ENCODE measurements at regions of chr15 and their contacts with region 1.

Region 1: DNA sequence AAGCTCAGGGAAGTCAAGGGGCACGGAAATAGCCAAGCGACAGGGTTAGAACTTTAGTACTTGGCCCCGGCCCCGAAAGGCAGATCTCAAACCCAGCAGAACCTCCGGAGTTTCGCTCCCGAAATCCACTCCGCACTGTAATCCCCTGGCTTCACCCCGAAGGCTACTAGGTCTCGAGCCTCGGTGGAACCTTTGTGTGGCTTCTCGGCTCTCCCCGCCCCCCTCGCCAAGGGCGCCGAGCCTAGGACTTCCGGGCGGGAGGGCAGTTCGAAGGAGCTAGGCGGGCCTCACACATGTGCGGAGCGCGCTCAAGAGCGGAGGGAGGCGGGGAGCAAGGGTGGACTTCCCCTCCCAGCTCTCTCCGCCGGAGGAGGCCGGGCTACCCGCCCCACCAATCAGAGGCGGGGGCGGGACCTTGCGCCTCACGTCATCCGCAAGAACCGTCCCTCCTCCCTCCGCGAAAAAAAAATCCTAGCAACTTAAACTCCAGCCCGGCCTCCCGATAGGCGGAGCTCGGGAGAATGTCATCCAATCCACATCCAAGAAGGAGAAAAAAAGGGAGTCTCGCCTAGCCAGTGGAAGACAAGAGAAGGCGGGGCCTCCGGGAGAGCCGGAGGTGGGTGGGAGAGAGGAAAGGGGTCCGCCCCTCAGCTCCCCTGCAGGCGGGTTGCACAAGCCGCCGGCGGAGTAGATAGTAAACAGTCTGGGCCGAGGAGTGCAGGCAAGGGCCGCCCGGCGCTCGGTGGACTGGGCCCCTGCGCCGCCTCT is 2.4 kb upstream of the SIN3A start:
- DNase-seq: peak; percentile 98
- H3K4me3 Mint-ChIP-seq: peak overlapping the region; percentile 98
- H3K27ac Mint-ChIP-seq: peak overlapping the region; percentile 98
- H3K4me1 Mint-ChIP-seq: peaks cover 24% of the 10 kb centered on the region
- H3K27me3 Mint-ChIP-seq: no peaks in the 10 kb centered on the region

Region 2: GRCh38 chr15:74540761-74541493 is 913.0 kb before region 1 on chr15 and contains the start of gene ARID3B:
- CTCF ChIA-PET with region 1: no interaction called
- intact Hi-C with region 1: loop called (anchors 5 kb)
- DNase-seq: peak; percentile 99
- H3K4me3 Mint-ChIP-seq: peak within 1 kb of the TSS; percentile 97
- H3K27ac Mint-ChIP-seq: peak within 1 kb of the TSS; percentile 90
- H3K4me1 Mint-ChIP-seq: peaks cover 46% of the 10 kb centered on the region
- H3K27me3 Mint-ChIP-seq: no peaks in the 10 kb centered on the region
- total RNA-seq, gene ARID3B: 14.2 to 15.9 TPM

Region 3: DNA sequence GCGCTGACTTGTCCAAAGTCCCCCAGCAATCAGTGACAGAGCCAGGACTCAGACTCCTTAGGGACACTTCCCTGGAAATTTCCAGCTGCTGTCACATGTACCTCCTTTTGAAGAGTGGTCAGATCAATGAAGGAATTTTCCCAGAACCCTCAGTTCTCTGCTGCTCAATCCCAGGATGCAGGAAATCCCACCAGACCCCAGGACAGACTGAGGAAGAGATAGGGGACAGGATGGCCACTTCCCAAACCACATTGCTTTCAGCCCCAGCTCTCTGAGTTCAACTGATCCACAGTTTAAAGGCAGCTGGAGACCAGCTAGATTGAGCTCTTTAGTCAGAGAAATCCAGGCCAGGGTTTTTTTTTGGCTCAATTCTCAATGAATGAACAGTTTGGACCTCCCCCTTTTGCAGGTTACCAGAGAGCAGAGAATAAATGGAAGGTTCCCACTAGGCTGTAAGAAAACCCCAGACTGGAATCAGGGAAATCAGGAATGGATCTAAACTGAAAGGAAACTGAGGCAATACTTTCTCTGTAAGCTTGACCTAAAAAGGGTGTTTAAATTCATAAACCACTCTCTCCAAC is 730.0 kb before region 1 on chr15:
- CTCF ChIA-PET with region 1: no interaction called
- intact Hi-C with region 1: no loop called
- DNase-seq: no peak
- H3K4me3 Mint-ChIP-seq: no peak overlapping the region
- H3K27ac Mint-ChIP-seq: no peak overlapping the region
- H3K4me1 Mint-ChIP-seq: peaks cover 11% of the 10 kb centered on the region
- H3K27me3 Mint-ChIP-seq: peaks cover 14% of the 10 kb centered on the region

Region 4: DNA sequence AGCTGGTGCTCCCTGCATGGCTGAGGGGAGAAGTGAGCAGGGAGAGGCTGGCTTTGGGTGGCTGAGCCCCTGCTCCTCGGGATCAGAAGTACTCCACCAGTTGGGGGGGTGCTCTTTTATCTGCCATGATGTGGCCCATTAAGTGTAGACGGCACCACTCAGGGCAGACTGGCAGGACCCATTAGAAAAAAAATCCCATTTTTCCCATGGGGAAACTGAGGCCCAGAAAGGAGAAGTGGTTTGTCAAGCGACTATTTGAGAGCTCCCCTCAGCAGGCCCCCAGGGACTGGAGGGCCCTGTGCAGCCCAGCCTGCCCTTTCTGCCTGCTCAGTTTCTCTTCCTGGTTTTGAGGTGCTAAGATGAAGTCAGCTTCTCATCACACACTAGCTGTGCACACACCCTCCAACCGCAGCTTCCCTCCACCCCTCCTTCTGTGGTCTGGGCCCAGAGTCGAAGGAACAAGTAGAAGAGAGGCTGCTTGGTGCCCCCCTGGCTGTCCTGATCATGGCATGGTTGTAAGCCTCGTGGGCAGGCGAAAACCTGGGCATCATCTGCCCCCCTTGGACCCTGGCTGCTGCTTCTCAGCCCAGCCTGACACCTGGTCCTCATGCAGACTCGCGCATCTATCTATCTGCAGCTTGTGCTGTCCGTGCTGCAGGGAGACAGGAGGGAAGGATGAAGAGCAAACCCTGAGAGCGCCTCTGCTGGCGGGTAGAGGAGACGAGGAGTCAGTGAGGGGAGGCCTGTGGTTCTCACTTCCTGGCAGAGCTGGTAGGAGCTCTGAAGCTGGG is 666.4 kb before region 1 on chr15:
- CTCF ChIA-PET with region 1: no interaction called
- intact Hi-C with region 1: loop called (anchors 2 kb)
- DNase-seq: peak; percentile 98
- H3K4me3 Mint-ChIP-seq: peak overlapping the region; percentile 93
- H3K27ac Mint-ChIP-seq: peak overlapping the region; percentile 99
- H3K4me1 Mint-ChIP-seq: peaks cover 55% of the 10 kb centered on the region
- H3K27me3 Mint-ChIP-seq: no peaks in the 10 kb centered on the region

Region 5: DNA sequence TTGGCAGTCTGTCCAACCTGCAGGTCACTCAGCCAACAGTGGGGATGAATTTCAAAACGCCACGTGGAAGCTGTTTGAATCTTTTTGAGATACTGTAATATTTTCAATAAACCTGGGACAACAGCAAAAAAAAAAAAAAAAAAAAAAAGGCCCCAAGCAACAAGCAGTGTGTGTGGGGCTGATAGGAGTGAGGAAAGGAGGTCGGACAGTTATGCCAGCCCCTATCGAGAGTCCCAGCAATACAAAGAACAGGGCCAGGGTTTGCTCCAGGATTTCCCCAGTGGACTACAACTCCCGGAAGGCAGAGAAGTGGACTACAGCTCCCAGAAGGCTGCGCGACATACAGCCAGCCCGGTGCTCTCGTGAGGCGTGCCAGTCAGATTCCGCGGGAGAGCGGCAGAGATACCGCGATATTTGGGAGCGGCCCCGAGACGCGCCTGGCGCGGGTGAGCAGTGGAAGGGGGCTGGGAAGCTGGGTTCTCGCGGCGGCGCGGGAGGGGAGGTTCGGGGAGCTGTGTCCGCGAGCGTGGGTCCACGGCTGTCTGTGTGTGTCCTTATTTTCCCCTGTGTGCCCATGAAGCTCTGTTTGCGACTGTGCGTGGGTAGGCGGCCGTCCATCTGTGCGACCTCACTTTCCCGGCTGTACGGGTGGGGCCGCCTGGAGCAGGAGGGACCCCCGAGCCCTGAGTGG is 430.6 kb before region 1 on chr15 and contains the start of gene PPCDC:
- CTCF ChIA-PET with region 1: no interaction called
- intact Hi-C with region 1: loop called (anchors 2 kb)
- DNase-seq: peak; percentile 98
- H3K4me3 Mint-ChIP-seq: peak within 1 kb of the TSS; percentile 90
- H3K27ac Mint-ChIP-seq: peak within 1 kb of the TSS; percentile 90
- H3K4me1 Mint-ChIP-seq: peaks cover 16% of the 10 kb centered on the region
- H3K27me3 Mint-ChIP-seq: no peaks in the 10 kb centered on the region
- total RNA-seq, gene PPCDC: 17.5 to 18.0 TPM

Region 6: DNA sequence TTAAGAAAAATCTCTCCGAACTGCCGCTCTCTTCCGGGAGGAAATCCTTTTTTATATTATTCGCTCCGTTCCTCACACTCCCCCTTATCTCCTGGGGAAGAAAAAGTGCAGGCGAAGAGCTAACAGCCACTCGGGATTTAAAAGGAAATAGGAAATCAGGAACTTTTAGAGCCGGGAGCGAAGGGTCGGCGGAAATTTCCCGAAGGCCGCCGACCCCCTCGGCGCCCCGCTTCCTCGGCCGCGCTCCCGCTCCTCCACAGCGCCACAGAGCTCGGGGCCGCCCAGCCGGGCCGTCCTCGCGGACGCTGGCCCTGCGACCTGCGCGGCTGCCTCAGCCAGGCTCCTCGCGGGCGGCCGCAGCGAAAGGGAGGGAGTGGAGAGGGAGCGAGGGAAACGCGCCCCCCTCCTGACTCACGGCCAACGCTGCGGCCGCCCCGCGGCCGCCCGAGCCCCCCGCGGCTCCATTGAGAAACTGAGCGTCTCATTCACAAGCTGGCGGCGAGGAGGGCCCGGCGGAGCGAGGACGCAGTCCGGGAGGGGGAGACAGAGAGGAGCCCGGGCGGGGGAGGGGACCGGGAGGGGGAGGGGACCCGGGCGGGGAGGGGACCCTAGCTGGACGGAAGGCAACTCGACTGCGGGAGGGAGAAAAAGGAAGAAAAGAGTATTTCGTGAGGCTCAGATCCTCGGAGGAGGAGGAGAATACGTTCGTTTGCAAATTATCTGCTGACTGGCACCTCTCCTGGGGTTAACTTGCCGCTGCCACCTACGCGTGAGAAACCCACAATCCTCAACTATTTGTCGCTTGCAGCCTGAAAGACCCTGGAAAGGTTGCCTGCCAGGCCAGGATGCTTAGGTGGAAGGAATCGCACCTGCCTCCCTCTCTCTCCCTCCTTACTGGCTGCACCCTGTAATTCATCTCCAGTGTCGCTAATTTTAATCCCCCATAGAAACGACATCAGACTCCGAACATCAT is 125.3 kb after region 1 on chr15 and contains the start of gene PTPN9:
- CTCF ChIA-PET with region 1: no interaction called
- intact Hi-C with region 1: loop called (anchors 1 kb)
- DNase-seq: peak; percentile 76
- H3K4me3 Mint-ChIP-seq: peak within 1 kb of the TSS; percentile 90
- H3K27ac Mint-ChIP-seq: peak within 1 kb of the TSS; percentile 86
- H3K4me1 Mint-ChIP-seq: peaks cover 14% of the 10 kb centered on the region
- H3K27me3 Mint-ChIP-seq: no peaks in the 10 kb centered on the region
- total RNA-seq, gene PTPN9: 9.5 to 10.1 TPM

Region 7: DNA sequence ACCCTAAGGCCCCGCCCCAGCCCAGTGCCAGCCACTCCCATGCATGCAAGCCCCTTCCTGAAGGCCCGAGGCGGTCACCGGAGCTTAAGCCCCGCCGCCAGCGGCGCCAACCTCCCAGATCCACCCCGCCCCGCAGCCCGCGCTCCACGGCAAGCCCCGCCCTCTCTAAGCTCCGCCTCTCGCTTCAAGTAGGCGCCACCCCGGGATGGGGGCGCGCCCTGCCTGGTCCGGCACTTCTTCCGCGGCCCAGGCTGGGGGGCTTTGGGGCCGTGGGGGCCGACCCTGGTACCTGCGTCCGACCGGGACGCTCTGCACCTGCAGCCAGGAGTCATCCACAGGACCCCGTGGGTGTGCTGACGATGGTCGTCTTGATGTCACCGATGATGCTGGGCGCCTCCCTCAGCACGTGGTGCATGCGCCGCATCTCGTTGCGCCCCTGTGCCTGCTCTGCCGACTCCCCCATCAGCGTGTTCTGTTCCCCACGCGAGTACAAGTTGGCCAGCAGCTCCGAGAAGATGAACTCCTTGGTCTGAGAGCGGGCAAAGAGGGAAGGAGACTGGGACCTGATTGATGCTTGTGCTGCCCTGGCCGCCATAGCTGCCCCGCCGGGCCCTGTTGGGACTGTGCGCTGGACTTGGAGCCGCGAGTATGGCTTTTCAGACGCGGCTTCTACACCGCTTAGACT is 284.9 kb after region 1 on chr15:
- CTCF ChIA-PET with region 1: no interaction called
- intact Hi-C with region 1: loop called (anchors 1 kb)
- DNase-seq: peak; percentile 94
- H3K4me3 Mint-ChIP-seq: peak overlapping the region; percentile 82
- H3K27ac Mint-ChIP-seq: no peak overlapping the region
- H3K4me1 Mint-ChIP-seq: peaks cover 5% of the 10 kb centered on the region
- H3K27me3 Mint-ChIP-seq: peaks cover 5% of the 10 kb centered on the region

Region 8: GRCh38 chr15:76994971-76995945 is 1541.4 kb after region 1 on chr15 and contains the start of gene PSTPIP1:
- CTCF ChIA-PET with region 1: no interaction called
- intact Hi-C with region 1: loop called (anchors 10 kb)
- DNase-seq: peak; percentile 86
- H3K4me3 Mint-ChIP-seq: peak within 1 kb of the TSS; percentile 84
- H3K27ac Mint-ChIP-seq: peak within 1 kb of the TSS; percentile 98
- H3K4me1 Mint-ChIP-seq: peaks cover 58% of the 10 kb centered on the region
- H3K27me3 Mint-ChIP-seq: no peaks in the 10 kb centered on the region
- total RNA-seq, gene PSTPIP1: 94.2 to 102 TPM

Measured in activated naive CD4-positive, alpha-beta T cell treated with anti-CD3 and anti-CD28 coated beads for 36 hours (primary cell).